ENCODE measurements at regions of chr7 and their contacts with region 1.

Region 1: DNA sequence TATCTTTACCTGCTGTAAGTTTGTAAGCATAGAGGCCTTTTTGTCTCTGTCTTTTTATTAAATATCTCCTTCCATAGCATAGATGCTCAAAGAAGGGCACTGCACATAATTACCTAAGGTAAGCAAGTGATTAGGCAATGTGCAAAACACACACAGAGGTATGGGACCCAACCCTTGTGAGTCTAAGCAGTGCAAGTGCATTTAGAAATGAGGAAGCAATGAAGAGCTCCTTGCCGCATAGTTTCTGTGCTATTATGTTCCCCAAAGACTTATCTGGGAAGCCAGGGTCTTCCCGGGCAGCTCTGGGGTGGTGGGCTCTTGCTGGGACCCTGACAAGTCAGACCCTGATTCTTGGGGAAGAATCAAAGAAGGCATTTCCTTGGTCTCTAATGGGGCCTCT is 13.5 kb upstream of the MGAM2 start:
- DNase-seq: no peak
- ATAC-seq: no peak

Region 2: GRCh38 chr7:142063551-142064442 is 34.2 kb before region 1 on chr7:
- intact Hi-C with region 1: loop called (anchors 5 kb)
- DNase-seq: no peak
- ATAC-seq: no peak

Measured in sciatic nerve (tissue), 2 donors.